H1 (cell line): ENCODE measurements at regions of chr3 and their contacts with region 1.

Region 1: GRCh38 chr3:7015683-7016440 is 154.9 kb downstream of the GRM7 start:
- DNase-seq: no peak
- H3K4me3 ChIP-seq: no peak overlapping the region
- H3K27ac ChIP-seq: no peak overlapping the region
- H3K4me1 ChIP-seq: peaks cover 0 to 7% (median 2%) of the 10 kb centered on the region in 4 experiments; a peak in 2 of 7 replicates
- H3K27me3 ChIP-seq: no peaks in the 10 kb centered on the region
- CTCF ChIP-seq: no peak
- EP300 ChIP-seq: no peak
- POLR2A ChIP-seq: no peak
- RAD21 ChIP-seq: no peak

Region 2: DNA sequence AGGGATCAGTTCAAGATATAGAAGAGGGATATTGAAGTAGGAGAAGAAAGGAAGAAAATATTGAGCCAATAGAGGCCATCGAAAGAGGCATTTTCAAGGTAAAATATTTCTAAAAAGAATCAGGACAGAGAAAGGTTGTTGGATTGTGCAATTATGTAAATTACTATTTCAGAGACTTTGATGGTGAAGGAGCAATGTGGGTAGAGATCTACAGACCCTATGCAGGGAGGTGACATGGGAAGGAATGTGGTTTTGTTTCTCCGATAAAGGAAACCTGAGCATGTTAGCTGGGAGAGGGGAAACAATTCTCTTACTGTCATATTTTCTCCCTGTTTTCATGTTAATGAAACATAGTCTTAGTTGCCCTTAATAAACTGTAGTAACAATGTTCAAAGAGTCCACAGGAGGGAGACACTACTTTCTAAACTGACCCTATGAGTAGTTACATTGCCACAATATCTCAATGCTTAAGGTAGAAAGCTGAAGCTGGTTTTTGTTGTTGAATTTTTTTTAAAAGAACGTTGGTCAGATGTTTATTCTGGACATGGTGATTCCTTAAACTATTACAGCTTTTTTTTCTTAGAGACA is 21.7 kb before region 1 on chr3:
- CTCF ChIA-PET with region 1: interaction called, 11 read pairs
- POLR2A ChIA-PET with region 1: no interaction called
- DNase-seq: no peak
- H3K4me3 ChIP-seq: no peak overlapping the region
- H3K27ac ChIP-seq: no peak overlapping the region
- H3K4me1 ChIP-seq: peaks cover 0 to 4% (median 0%) of the 10 kb centered on the region in 4 experiments; a peak in 1 of 7 replicates
- H3K27me3 ChIP-seq: no peaks in the 10 kb centered on the region
- CTCF ChIP-seq: peak in 2 of 3 experiments; percentile 11 to 44; a peak in 2 of 4 replicates
- EP300 ChIP-seq: no peak
- POLR2A ChIP-seq: no peak
- RAD21 ChIP-seq: peak; percentile 44 to 47; a peak in 3 of 4 replicates